Ovary (tissue), 10 donors: ENCODE measurements at regions of chr5 and their contacts with region 1.

Region 1: GRCh38 chr5:159915904-159916840 is at the start of gene ADRA1B:
- DNase-seq: peak; percentile 80 to 89 (median 84)
- H3K4me3 ChIP-seq: peak within 1 kb of the TSS; percentile 42
- H3K27ac ChIP-seq: peak within 1 kb of the TSS; percentile 60 to 65
- H3K4me1 ChIP-seq: peaks cover 7% of the 10 kb centered on the region
- H3K27me3 ChIP-seq: no peaks in the 10 kb centered on the region
- CTCF ChIP-seq: peak; percentile 33 to 70 (median 62)
- EP300 ChIP-seq: no peak
- POLR2A ChIP-seq: no peak
- total RNA-seq, gene ADRA1B: 0.95 to 9.1 (median 3.6) TPM

Region 2: DNA sequence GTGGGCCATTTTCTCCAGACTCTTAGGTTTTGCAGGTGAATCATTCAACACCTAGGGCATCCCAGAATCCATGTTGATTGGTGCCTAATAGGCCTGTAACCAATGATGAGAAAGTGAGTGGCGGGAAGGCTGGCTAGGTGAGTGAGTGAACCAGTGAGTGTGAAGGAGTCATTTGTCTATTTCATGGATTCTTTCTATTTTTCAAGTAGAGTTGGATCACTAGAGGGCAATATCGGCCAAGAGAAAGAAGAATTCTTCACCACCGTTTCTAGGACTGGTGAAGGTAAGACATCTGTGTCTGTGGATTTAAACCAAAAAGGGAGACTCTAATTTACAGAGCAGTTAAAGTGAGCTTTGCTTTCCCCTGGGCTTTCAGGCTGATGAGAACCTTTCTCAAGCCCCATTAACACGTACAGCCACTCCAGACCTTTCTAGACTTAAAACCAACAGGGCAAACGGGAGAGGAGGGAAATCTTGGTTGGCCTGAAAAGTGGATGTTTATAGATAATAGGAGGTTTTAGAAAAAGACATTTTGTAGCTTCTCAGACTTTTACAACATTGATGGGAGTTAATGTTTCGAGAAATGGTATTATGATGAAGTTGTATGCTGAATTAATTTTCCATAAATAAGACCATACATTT is 471.6 kb before region 1 on chr5:
- intact Hi-C with region 1: loop called (anchors 1 to 5 kb)
- DNase-seq: no peak
- H3K4me3 ChIP-seq: no peak overlapping the region
- H3K27ac ChIP-seq: no peak overlapping the region
- H3K4me1 ChIP-seq: no peaks in the 10 kb centered on the region
- H3K27me3 ChIP-seq: no peaks in the 10 kb centered on the region
- CTCF ChIP-seq: peak; percentile 13 to 57 (median 53)
- EP300 ChIP-seq: no peak
- POLR2A ChIP-seq: no peak

Region 3: DNA sequence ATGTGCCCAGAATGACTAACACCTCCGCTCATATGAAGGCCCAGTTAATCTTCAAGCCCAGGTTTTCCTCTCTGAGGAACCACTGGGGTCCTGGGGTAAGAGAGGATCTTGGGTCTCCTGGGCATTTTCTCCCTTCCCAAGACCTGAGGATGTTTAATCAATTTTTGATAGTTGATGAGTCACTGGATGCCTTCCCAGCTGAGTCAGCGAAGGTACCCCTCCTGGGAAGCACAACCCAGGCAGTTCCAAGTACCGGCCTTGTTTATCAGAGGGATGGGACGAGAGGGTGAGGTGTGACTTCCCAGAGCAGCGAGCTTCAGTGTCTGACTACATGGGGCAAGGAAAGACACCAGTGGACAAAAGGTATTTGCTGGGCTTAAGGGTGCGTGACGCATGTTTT is 466.2 kb before region 1 on chr5:
- intact Hi-C with region 1: loop called in 2 of 4 experiments (anchors 2 to 5 kb)
- DNase-seq: no peak
- H3K4me3 ChIP-seq: no peak overlapping the region
- H3K27ac ChIP-seq: no peak overlapping the region
- H3K4me1 ChIP-seq: peaks cover 2% of the 10 kb centered on the region
- H3K27me3 ChIP-seq: no peaks in the 10 kb centered on the region
- CTCF ChIP-seq: no peak
- EP300 ChIP-seq: no peak
- POLR2A ChIP-seq: no peak

Region 4: GRCh38 chr5:159515909-159516415 is 400.2 kb before region 1 on chr5:
- intact Hi-C with region 1: loop called in 2 of 4 experiments (anchors 5 to 10 kb)
- DNase-seq: peak; percentile 48 to 77 (median 54)
- H3K4me3 ChIP-seq: no peak overlapping the region
- H3K27ac ChIP-seq: no peak overlapping the region
- H3K4me1 ChIP-seq: no peaks in the 10 kb centered on the region
- H3K27me3 ChIP-seq: no peaks in the 10 kb centered on the region
- CTCF ChIP-seq: peak; percentile 14 to 60 (median 17)
- EP300 ChIP-seq: no peak
- POLR2A ChIP-seq: no peak

Region 5: DNA sequence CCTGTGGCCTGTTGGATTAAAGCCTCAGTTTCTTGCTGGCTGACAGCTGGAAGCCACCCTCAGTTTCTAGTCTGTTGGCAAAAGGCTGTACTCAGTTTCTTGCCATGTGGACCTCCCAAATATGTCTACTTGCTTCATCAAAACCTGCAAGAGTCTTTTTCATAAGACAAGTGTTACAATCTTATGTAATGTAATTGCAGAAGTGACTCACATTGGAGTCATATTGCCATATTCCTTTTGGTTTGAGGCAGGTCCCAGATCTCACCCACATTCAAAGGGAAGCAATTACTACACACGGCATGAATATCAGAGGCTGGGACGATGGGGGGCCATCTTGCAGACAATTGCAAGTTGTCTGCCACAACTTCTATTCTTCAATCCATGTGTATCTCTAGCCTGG is 299.2 kb before region 1 on chr5:
- intact Hi-C with region 1: loop called in 1 of 4 experiments (anchors 10 kb)
- DNase-seq: no peak
- H3K4me3 ChIP-seq: no peak overlapping the region
- H3K27ac ChIP-seq: no peak overlapping the region
- H3K4me1 ChIP-seq: no peaks in the 10 kb centered on the region
- H3K27me3 ChIP-seq: no peaks in the 10 kb centered on the region
- CTCF ChIP-seq: no peak
- EP300 ChIP-seq: no peak
- POLR2A ChIP-seq: no peak

Region 6: GRCh38 chr5:159773062-159773924 is 142.9 kb before region 1 on chr5:
- intact Hi-C with region 1: loop called in 2 of 4 experiments (anchors 10 kb)
- DNase-seq: peak; percentile 83 to 91 (median 88)
- H3K4me3 ChIP-seq: peak overlapping the region; percentile 22
- H3K27ac ChIP-seq: peak overlapping the region in 1 of 2 donors; percentile 36
- H3K4me1 ChIP-seq: peaks cover 2% of the 10 kb centered on the region
- H3K27me3 ChIP-seq: no peaks in the 10 kb centered on the region
- CTCF ChIP-seq: peak in 1 of 3 donors; percentile 30
- EP300 ChIP-seq: peak; percentile 30
- POLR2A ChIP-seq: peak; percentile 38